ENCODE measurements at regions of chr13 and their contacts with region 1.

Region 1: DNA sequence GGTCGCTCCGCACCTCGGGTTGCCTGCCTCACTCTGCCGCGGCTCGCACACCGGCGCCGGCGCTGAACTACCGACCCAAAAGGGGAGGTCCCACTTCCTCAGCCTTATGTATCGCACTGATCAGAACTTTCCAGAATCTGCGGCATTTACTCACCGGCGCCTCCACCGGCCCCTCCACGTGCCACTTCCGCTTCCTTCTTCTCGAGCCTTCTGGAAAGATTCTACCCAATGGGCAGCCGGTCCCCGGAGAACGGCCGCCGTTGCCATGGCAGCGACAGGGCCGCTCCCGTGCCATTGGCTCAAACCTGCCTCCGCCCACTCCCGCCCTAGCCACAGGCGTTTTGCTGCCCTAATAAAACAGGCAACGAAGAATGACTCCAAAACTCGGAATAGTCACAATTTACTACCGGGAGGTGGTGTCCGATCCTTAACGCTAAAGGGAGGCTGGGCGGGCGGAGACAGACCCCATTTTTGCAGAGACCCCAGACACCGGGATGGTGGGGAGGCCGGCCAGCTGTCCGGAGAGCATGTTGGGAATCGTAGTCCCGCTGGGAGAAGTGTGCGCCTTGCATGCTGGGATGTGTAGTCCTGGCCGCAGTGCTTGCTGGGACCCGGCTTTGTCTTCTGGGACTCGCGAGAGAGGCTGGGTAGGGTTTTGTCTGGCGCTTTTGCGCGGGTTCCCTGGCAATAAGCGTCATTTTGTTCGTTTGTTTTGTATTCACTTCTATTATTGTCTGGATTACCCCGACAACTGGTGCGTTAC is at the start of gene HSPH1:
- DNase-seq: peak; percentile 99
- H3K4me3 Mint-ChIP-seq: peak within 1 kb of the TSS; percentile 96
- H3K27ac Mint-ChIP-seq: peak within 1 kb of the TSS; percentile 98
- H3K4me1 Mint-ChIP-seq: peaks cover 27% of the 10 kb centered on the region
- H3K27me3 Mint-ChIP-seq: no peaks in the 10 kb centered on the region
- total RNA-seq, gene HSPH1: 122 to 150 TPM

Region 2: DNA sequence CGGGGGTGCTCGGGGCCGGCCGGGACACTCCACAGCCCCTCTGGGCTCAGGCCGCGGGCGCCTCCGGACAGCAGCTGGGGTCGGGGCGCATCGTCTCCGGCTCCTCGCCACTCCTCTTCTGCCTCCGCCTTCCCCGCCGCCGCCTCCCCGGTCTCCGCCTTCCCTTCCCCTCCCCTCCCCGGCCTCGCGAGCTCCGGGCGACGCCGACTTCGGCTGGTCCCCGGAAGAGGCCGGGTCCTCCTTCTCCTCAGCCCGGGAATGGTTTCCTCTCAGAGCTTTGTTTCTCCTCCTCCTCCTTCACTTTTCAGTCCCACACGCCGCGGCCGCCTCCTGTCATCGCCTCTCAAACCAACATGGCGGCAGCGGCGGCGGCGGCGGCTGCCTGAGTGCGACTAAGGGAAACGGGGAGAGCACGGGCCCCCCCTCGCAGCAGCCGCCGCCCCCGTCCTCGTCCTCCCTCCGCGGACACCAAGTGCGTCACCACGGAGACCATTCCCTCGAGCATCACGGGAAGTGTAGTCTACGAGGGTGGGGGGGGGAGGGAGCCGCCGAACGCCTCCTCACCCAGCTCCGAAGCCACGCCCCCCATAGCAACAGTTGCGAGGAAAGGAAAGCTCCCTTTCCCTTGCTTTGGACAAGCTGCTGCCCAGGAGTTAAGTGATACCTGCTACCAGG is 1311.6 kb before region 1 on chr13 and contains the start of gene UBL3:
- CTCF ChIA-PET with region 1: no interaction called
- intact Hi-C with region 1: loop called (anchors 2 kb)
- DNase-seq: peak; percentile 96
- H3K4me3 Mint-ChIP-seq: peak within 1 kb of the TSS; percentile 83
- H3K27ac Mint-ChIP-seq: peak within 1 kb of the TSS; percentile 97
- H3K4me1 Mint-ChIP-seq: peaks cover 28% of the 10 kb centered on the region
- H3K27me3 Mint-ChIP-seq: no peaks in the 10 kb centered on the region
- total RNA-seq, gene UBL3: 8.3 to 8.5 TPM

Region 3: GRCh38 chr13:30617315-30618185 is 544.5 kb before region 1 on chr13 and contains the start of gene USPL1:
- CTCF ChIA-PET with region 1: no interaction called
- intact Hi-C with region 1: loop called (anchors 1 kb)
- DNase-seq: peak; percentile 98
- H3K4me3 Mint-ChIP-seq: no peak within 1 kb of the TSS
- H3K27ac Mint-ChIP-seq: no peak within 1 kb of the TSS
- H3K4me1 Mint-ChIP-seq: peaks cover 29% of the 10 kb centered on the region
- H3K27me3 Mint-ChIP-seq: no peaks in the 10 kb centered on the region
- total RNA-seq, gene USPL1: 10.7 to 11.3 TPM

Region 4: DNA sequence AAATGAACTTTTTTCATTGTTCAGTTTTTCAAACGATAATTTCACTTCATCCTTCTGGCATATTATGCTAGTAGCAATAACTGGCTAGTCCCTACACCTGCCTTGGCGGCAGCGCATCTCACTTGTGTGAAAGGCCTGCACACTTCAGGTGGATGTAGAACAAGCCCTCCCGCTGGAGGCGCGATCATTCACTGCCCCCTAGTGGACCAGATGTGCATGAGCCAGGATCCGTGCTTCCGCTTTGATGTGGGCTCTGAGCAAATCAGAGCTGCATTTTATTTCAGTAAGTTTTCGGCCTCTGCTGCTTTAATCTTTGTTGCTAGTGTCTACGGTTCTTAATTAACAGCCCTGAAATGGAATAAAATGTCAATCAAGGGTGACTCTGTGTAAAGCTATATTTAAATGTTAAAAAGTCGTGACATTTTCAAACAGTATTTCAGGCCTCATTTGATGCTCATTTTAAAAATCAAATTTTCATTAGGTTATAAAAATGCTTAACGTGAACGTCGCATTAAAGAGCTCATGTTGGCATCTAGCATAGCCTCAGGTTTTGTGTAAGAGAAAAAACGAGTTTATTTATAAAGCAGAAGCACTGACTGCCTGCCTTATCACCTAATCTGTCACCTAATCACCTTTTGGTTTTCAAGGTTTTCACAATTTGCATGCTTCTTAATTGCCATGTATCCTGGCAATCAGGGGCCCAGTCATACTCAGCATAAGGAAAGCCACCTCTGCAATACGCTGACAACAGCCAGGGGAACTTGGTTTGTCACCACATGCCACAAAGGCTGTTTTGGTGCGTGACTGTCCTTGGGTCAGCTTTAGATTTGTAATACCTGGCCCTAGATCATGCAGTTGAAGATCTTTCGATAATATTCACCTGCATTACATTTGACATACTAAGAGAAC is 117.4 kb before region 1 on chr13:
- CTCF ChIA-PET with region 1: no interaction called
- intact Hi-C with region 1: loop called (anchors 1 kb)
- DNase-seq: peak; percentile 93
- H3K4me3 Mint-ChIP-seq: no peak overlapping the region
- H3K27ac Mint-ChIP-seq: peak overlapping the region; percentile 78
- H3K4me1 Mint-ChIP-seq: peaks cover 43% of the 10 kb centered on the region
- H3K27me3 Mint-ChIP-seq: peaks cover 2% of the 10 kb centered on the region

Region 5: DNA sequence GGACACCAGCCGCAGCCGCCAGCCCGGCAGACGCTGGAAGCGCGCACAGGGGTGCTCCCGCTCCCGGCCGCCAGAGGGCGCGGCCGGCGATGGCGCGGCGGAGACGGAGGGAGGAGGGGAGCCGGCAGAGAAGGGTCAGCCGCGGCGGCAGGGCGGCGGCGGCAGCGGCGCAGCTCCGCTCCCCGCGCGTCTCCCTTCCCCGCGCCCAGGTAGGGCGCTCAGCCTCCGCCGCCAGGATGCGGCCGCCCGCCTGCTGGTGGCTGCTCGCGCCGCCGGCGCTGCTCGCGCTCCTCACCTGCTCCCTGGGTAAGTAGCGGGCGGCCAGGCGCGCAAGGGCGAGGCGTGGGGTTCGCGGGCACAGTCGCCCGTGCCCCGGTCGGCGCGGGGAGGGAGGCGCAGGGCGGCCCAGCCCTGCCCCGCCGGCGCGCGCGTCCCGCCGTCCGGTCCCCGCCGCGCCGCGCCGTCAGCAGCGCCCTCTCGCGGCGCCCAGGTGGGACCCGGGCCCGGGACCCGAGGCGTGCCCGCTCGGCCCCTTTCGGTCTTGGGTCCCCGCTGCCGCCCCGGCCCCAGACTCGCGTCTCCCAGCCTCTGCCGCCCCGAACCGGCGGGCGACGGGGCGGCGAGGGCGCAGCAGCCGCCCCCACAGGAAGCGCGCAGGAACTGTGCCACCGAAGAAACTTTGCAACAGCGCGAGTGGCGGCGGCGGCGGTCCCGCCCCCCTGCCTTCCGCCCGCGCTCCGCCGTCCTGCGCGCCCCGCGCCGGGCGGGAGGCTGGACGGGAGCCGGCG is 38.0 kb after region 1 on chr13 and contains the start of gene B3GLCT:
- CTCF ChIA-PET with region 1: interaction called, 6 read pairs
- intact Hi-C with region 1: loop called (anchors 1 kb)
- DNase-seq: peak; percentile 65
- H3K4me3 Mint-ChIP-seq: peak within 1 kb of the TSS; percentile 83
- H3K27ac Mint-ChIP-seq: peak within 1 kb of the TSS; percentile 68
- H3K4me1 Mint-ChIP-seq: peaks cover 26% of the 10 kb centered on the region
- H3K27me3 Mint-ChIP-seq: no peaks in the 10 kb centered on the region
- total RNA-seq, gene B3GLCT: 1.2 to 1.5 TPM

Region 6: DNA sequence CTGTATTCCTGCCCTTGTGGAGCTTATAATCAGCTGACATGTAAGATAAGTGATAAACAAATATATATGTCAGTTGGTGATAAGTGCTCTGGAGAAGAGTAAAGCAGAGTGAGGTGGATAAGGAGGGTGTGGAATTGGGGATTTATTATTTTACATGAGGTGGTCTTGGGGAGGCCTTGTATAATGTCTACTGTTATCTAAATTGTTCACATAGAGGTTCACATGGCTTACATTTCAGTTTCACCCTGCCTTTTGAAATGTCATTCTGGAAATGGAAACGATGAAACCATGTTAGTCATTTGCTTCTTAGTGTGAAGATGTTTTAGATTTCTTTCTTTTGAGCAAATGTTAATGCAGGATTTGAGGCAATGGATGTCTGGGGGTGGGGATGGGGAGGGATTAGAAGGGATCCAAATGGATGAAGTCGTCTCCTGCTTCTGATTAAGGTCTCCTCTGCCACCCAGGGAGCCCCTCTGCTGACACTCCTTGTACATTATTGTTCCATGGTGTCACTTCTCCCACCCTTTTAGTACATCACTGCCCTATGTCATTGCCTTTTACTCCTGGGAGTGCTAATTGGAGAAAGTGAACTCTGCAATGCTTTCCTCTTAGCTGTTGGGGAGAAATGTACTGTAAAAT is 51.8 kb after region 1 on chr13:
- CTCF ChIA-PET with region 1: no interaction called
- intact Hi-C with region 1: no loop called
- DNase-seq: no peak
- H3K4me3 Mint-ChIP-seq: no peak overlapping the region
- H3K27ac Mint-ChIP-seq: no peak overlapping the region
- H3K4me1 Mint-ChIP-seq: peaks cover 12% of the 10 kb centered on the region
- H3K27me3 Mint-ChIP-seq: no peaks in the 10 kb centered on the region

Region 7: DNA sequence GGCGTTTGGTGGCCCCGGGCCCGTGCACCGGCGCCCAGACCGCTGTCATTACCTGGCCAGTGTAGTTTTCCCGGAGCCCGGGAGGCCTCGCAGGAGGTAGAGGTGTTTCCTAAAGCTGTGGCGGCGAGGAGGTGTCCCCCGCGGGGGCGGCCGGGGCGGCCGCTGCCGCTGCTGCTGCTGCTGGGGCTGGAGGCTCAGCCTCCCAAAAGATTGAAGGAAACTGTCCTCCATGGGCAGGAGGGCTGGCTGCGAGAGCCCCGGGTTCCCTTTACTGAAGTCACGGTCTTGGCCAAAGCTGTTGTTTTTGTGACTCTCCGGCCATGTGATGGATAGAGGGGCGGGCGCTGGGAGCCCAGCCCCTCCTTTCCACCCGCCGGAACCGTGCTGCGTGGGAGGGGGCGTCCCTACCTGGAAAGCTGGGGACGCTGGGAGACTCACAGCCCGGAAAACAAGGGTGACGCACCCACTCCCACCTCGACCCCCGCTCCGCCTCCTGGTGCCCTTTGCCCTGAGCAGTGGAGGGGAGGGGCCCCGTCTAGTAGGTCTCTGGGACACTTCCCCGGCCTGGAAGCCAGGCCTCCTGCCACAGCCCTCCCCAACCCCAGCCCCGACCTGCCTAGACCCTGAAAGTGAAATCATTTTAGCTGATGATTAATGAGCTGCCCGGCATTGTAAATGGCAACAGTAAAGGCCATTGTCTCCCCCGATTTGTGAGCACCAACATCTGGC is 1266.0 kb after region 1 on chr13 and contains the start of gene N4BP2L1:
- CTCF ChIA-PET with region 1: no interaction called
- intact Hi-C with region 1: loop called (anchors 2 kb)
- DNase-seq: peak; percentile 95
- H3K4me3 Mint-ChIP-seq: peak within 1 kb of the TSS; percentile 94
- H3K27ac Mint-ChIP-seq: peak within 1 kb of the TSS; percentile 97
- H3K4me1 Mint-ChIP-seq: peaks cover 31% of the 10 kb centered on the region
- H3K27me3 Mint-ChIP-seq: no peaks in the 10 kb centered on the region
- total RNA-seq, gene N4BP2L1: 22.6 TPM

Measured in activated naive CD4-positive, alpha-beta T cell treated with anti-CD3 and anti-CD28 coated beads for 36 hours (primary cell).